Activated naive CD8-positive, alpha-beta T cell treated with anti-CD3 and anti-CD28 coated beads, Interleukin-2, amount 10 ng/mL, durations not matched to agents 7 days and 5 days (primary cell): ENCODE measurements at regions of chr20 and their contacts with region 1.

Region 1: DNA sequence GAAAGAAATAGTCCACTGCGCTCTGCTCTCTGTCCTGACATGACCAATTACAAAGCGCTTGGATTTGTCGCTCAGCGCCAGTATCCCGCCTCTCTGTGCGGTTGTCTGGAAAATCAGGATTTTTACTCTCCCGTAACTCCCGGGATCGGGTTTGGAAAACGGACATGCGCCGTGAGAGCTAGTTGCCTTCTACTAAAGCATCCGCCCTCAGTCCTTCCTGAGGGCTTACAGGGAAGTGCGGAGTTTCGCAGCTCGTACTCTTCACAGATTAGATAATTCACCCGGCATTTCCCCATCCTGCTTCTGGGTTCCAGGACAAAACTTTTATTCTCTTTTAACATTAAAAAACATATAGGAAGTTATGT is 427 bp upstream of the MKKS start:
- DNase-seq: peak; percentile 67
- ATAC-seq: peak; percentile 38
- H3K4me3 Mint-ChIP-seq: peak overlapping the region; percentile 98
- H3K27ac Mint-ChIP-seq: peak overlapping the region; percentile 94
- H3K4me1 Mint-ChIP-seq: peaks cover 32% of the 10 kb centered on the region
- H3K27me3 Mint-ChIP-seq: no peaks in the 10 kb centered on the region

Region 2: DNA sequence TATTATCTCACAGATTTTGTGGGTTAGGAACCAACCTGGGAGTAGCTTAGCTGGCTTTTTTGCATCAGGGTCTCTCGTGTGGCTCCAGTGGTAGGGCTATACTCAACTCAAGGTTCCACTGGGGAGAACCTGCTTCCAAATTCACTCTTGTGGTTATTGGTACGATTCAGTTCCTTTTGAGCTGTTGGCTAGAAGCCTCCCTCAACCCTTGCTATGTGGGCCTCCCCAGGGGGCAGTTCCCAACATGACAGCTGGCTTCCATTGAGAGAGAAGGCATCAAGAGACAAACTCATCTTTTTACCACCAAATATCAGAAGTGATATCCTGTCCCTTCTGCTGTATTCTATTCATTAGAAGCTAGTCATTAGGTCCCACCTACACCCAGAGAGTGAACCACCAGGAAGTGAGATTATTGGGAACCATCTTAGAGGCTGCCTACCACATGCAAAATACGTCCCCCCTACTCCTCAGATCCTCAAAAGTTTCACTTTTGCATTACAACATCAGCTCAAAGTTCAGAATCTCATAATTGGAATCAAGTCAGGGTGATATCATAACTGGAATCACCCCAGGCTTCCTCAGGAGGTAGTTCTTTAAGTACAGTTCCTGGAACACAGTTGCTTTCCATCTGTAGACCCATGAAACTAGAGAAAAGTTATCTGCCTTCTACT is 31.4 kb before region 1 on chr20:
- POLR2A ChIA-PET with region 1: no interaction called
- DNase-seq: no peak
- ATAC-seq: no peak
- H3K4me3 Mint-ChIP-seq: no peak overlapping the region
- H3K27ac Mint-ChIP-seq: no peak overlapping the region
- H3K4me1 Mint-ChIP-seq: peaks cover 8% of the 10 kb centered on the region
- H3K27me3 Mint-ChIP-seq: no peaks in the 10 kb centered on the region

Region 3: DNA sequence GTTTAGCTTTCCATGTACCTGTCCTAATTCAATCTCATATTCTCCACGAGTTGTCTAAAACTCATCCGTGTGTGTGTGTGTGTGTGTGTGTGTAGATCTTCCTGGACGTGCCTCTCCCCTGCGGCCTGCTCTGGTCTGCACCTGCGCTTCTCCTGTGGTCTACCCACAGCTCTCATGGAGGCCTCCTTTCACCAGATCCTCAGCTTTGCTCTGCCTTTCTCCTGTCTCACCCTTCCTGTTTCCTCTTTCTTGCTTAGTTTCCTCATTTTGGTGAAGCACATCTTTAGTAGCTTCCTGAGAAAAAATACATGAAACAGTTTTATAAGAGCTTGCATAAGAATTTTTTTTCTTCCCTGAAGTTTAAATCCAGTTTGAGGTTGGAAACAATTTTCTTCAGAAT is 18.8 kb after region 1 on chr20:
- POLR2A ChIA-PET with region 1: interaction called, 11 read pairs
- DNase-seq: peak; percentile 43
- ATAC-seq: peak; percentile 91
- H3K4me3 Mint-ChIP-seq: peak overlapping the region; percentile 73
- H3K27ac Mint-ChIP-seq: peak overlapping the region; percentile 75
- H3K4me1 Mint-ChIP-seq: peaks cover 19% of the 10 kb centered on the region
- H3K27me3 Mint-ChIP-seq: no peaks in the 10 kb centered on the region

Region 4: GRCh38 chr20:10686356-10687133 is 252.1 kb after region 1 on chr20:
- POLR2A ChIA-PET with region 1: interaction called, 10 read pairs
- DNase-seq: no peak
- ATAC-seq: no peak
- H3K4me3 Mint-ChIP-seq: no peak overlapping the region
- H3K27ac Mint-ChIP-seq: no peak overlapping the region
- H3K4me1 Mint-ChIP-seq: no peaks in the 10 kb centered on the region
- H3K27me3 Mint-ChIP-seq: peaks cover 26% of the 10 kb centered on the region